ENCODE measurements at regions of chr11 and their contacts with region 1.

Region 1: DNA sequence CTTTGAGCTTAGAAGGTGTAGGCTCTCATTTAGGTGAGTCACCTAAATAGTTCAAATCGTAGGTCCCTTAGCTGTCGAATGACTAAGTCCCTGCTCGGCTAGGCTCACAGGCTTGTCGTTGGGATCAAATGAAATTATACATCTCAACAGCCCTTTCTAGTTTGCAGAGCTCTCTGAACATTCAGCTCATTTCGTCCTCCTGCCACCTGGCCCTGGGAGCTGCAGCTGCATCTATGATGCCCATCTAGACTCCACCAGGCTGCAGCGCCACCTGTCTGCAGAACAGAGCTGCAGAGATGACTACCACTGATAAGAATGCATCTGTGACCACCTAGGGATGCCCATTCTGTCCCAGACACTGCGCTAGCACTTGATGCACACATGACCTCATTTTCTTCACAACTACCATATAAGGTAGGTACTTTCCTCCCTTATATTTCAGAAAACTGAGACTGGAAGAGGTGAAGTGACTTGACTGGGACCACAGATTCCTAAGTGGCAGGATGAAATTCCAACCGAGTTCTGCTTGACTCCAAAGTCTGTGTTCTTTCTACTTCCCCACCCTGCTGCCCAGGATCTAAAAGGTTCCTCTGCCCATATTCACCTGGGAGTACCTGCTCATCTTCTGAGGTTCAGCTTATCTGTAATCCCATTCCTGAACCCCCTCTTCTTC is 141.1 kb upstream of the NARS2 start:
- DNase-seq: peak; percentile 78
- H3K4me3 Mint-ChIP-seq: no peak overlapping the region
- H3K27ac Mint-ChIP-seq: no peak overlapping the region
- H3K4me1 Mint-ChIP-seq: peaks cover 12% of the 10 kb centered on the region
- H3K27me3 Mint-ChIP-seq: no peaks in the 10 kb centered on the region
- CTCF ChIP-seq: peak; percentile 82

Region 2: DNA sequence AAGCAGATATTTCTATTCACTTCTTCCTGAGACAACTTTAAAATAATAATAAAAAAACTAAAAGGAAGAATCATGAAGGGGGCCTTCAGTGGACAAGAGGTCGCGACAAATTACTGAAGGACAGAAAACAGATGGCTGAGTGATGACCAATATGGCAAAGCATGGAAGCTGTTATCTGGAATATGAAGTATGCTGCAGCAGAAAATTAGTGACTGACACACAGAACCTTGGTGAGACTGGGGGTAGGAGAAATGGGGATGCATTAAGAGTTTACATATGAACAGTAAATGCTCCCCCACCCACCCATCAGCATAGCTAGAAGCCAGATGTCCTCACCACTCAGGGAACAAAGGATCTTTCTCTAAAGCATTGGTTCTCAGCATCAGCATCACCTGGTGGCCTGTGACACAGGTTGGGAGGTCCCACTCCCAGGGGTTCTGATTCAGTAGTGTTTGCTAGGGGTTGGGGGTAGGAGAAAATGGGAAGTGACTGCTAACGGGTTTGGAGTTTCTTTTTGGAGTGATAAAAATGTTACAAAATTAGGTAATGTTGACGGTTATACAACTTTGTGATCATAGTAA is 200.8 kb before region 1 on chr11:
- CTCF ChIA-PET with region 1: no interaction called
- POLR2A ChIA-PET with region 1: no interaction called
- intact Hi-C with region 1: no loop called
- DNase-seq: no peak
- H3K4me3 Mint-ChIP-seq: no peak overlapping the region
- H3K27ac Mint-ChIP-seq: no peak overlapping the region
- H3K4me1 Mint-ChIP-seq: peaks cover 1% of the 10 kb centered on the region
- H3K27me3 Mint-ChIP-seq: no peaks in the 10 kb centered on the region
- CTCF ChIP-seq: no peak

Region 3: GRCh38 chr11:78659326-78660270 is 56.2 kb before region 1 on chr11:
- CTCF ChIA-PET with region 1: interaction called, 5 read pairs
- POLR2A ChIA-PET with region 1: no interaction called
- intact Hi-C with region 1: loop called (anchors 5 kb)
- DNase-seq: peak; percentile 55
- H3K4me3 Mint-ChIP-seq: no peak overlapping the region
- H3K27ac Mint-ChIP-seq: no peak overlapping the region
- H3K4me1 Mint-ChIP-seq: peaks cover 24% of the 10 kb centered on the region
- H3K27me3 Mint-ChIP-seq: no peaks in the 10 kb centered on the region
- CTCF ChIP-seq: no peak

Region 4: GRCh38 chr11:78698612-78699011 is 17.2 kb before region 1 on chr11:
- CTCF ChIA-PET with region 1: interaction called, 25 read pairs
- POLR2A ChIA-PET with region 1: interaction called, 4 read pairs
- intact Hi-C with region 1: no loop called
- DNase-seq: peak; percentile 92
- H3K4me3 Mint-ChIP-seq: no peak overlapping the region
- H3K27ac Mint-ChIP-seq: no peak overlapping the region
- H3K4me1 Mint-ChIP-seq: peaks cover 7% of the 10 kb centered on the region
- H3K27me3 Mint-ChIP-seq: no peaks in the 10 kb centered on the region
- CTCF ChIP-seq: no peak

Region 5: DNA sequence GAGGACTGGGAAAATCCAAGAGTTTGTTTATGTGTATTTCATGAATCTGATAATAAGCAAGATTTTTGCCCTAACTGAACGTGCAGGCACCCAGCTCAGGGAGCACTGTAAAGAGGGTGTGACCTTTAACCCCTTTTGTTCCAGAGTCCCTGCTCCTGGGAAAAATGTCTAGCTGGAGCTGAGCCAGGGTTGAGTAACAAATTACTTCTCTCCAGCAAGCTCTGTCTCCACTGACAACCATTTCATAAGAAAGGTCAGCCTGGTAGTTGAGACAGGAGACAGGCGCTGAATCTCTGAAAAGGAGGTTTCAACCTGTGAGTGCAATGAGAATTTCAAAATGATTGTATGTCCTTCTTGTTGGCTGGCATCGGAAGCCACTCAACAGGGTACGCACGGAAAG is 15.3 kb after region 1 on chr11:
- CTCF ChIA-PET with region 1: interaction called, 31 read pairs
- POLR2A ChIA-PET with region 1: no interaction called
- intact Hi-C with region 1: no loop called
- DNase-seq: peak; percentile 75
- H3K4me3 Mint-ChIP-seq: no peak overlapping the region
- H3K27ac Mint-ChIP-seq: no peak overlapping the region
- H3K4me1 Mint-ChIP-seq: no peaks in the 10 kb centered on the region
- H3K27me3 Mint-ChIP-seq: no peaks in the 10 kb centered on the region
- CTCF ChIP-seq: no peak

Region 6: GRCh38 chr11:78742430-78742829 is 26.7 kb after region 1 on chr11:
- CTCF ChIA-PET with region 1: interaction called, 10 read pairs
- POLR2A ChIA-PET with region 1: no interaction called
- intact Hi-C with region 1: no loop called
- DNase-seq: peak; percentile 92
- H3K4me3 Mint-ChIP-seq: no peak overlapping the region
- H3K27ac Mint-ChIP-seq: peak overlapping the region; percentile 54
- H3K4me1 Mint-ChIP-seq: peaks cover 15% of the 10 kb centered on the region
- H3K27me3 Mint-ChIP-seq: no peaks in the 10 kb centered on the region
- CTCF ChIP-seq: no peak

Region 7: DNA sequence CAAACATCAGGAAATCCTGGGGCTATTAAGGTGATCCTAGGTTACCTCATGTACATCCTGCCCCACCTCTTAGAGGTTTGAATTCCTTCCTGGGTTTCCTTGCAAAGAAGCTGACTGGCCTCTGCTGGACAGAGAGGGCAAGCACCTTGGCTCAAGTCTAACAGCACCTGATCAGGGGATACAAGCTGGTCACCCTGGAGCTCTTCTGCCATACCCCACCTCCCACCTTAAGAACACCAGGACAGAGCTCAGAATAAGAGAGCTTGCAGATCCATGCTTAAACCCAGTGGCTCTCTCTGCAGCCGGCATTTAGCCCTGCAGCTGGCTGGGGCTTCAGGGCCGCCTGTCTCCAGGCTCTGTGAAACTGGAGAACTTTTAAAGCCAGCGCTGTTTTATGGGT is 245.5 kb after region 1 on chr11:
- CTCF ChIA-PET with region 1: interaction called, 6 read pairs
- POLR2A ChIA-PET with region 1: no interaction called
- intact Hi-C with region 1: loop called (anchors 2 kb)
- DNase-seq: peak; percentile 81
- H3K4me3 Mint-ChIP-seq: no peak overlapping the region
- H3K27ac Mint-ChIP-seq: no peak overlapping the region
- H3K4me1 Mint-ChIP-seq: no peaks in the 10 kb centered on the region
- H3K27me3 Mint-ChIP-seq: no peaks in the 10 kb centered on the region
- CTCF ChIP-seq: peak; percentile 59